CD8-positive, alpha-beta memory T cell (primary cell): ENCODE measurements at regions of chr1 and their contacts with region 1.

Region 1: GRCh38 chr1:53278201-53278725 is 39.9 kb upstream of the MAGOH start:
- DNase-seq: peak; percentile 49 to 78 (median 57)
- H3K4me3 ChIP-seq: no peak overlapping the region
- H3K4me3 Mint-ChIP-seq: no peak overlapping the region
- H3K27ac ChIP-seq: no peak overlapping the region
- H3K27ac Mint-ChIP-seq: peak overlapping the region in 3 of 8 donors; percentile 27 to 81 (median 66)
- H3K4me1 ChIP-seq: peaks cover 4% of the 10 kb centered on the region
- H3K4me1 Mint-ChIP-seq: peaks cover 2 to 5% (median 5%) of the 10 kb centered on the region in 3 donors
- H3K27me3 ChIP-seq: no peaks in the 10 kb centered on the region
- H3K27me3 Mint-ChIP-seq: no peaks in the 10 kb centered on the region

Region 2: DNA sequence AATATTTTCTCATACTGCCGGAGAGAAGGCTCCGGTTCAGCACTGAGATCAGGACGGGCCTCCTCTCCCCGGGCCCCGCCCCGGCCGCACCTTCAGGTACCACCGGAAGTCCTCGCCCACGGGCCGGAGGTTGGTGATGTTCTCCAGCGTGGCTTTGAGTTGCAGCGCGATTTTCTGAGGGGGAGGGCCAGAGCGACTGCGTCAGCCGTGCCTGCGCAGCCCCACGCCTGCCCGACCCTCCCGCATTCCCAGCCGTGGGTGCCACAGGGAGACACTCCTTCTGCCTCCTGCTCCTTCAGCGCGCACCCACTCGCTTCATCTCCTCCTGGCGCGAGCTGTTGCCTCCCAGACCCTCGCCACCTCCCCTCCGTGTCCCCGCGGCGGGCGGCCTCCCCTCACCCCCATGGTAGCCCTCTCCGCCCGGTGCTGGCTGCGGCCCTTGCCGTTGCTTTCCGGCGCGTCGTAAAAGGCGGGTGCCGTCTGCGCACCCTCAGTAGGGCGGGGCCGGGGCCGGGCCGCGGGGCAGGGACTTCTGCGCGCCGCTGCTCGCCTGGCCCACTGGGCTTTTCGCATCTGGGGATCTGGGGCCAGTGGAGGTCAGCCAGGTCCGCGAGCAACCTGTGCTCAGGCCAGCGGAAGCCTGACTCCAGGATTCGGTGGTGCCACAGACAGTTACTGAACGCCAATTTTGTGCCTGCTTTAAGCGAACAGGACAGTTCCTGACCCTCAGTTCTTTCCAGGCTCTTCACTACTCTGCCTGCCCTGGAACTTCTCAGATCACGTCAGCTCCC is 57.9 kb before region 1 on chr1 and contains the start of gene CZIB:
- CTCF ChIA-PET with region 1: no interaction called
- POLR2A ChIA-PET with region 1: no interaction called
- DNase-seq: peak; percentile 87 to 94 (median 91)
- H3K4me3 ChIP-seq: peak within 1 kb of the TSS; percentile 78
- H3K4me3 Mint-ChIP-seq: peak within 1 kb of the TSS; percentile 90 to 99 (median 93)
- H3K27ac ChIP-seq: peak within 1 kb of the TSS; percentile 90
- H3K27ac Mint-ChIP-seq: peak within 1 kb of the TSS; percentile 95 to 99 (median 98)
- H3K4me1 ChIP-seq: peaks cover 16% of the 10 kb centered on the region
- H3K4me1 Mint-ChIP-seq: peaks cover 23 to 28% (median 26%) of the 10 kb centered on the region in 3 donors
- H3K27me3 ChIP-seq: no peaks in the 10 kb centered on the region
- H3K27me3 Mint-ChIP-seq: peaks cover 0 to 4% of the 10 kb centered on the region in 2 donors
- total RNA-seq, gene CZIB: 58.0 to 58.4 TPM

Region 3: DNA sequence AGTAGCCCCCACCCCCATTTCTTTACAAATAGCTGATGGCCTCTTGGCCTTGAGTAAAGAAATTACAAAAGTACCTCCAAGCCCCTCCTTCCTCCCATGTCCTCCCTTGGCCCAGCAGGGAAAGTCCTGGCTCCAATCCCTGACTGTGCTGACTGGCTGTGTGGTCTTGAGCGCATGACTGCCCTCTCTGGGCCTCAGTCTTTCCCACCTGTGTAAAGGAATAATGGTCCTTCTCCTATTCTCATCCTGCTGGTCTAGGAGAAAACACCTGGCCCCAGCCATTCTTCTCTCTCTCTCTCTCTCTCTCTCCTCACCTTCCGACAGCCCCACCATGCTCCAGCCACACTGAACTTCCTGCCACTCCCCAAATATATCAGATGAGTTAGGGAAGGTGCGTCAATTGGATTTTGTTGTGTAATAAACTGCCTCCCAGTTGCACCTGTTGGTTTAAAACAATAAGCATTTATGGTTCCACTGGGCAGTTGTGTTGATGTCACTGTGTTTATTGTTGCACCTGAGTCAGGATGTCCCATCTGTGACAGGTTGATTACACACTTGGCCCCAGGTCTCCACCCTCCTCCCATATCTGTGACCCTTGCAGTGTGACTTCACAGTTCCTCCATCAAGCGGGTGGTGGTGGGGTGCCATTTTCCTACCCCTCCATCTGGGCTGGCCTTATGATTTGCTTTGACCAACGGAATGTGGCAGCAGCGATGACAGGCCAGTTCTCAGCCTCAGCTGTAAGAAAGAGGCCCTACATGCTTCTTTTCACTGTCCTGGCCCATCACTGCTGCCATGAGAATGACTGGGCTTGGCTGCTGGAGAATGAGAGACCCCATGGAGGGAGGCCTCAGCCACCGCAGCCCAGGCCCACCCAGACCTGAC is 71.9 kb after region 1 on chr1:
- CTCF ChIA-PET with region 1: no interaction called
- POLR2A ChIA-PET with region 1: no interaction called
- DNase-seq: no peak
- H3K4me3 ChIP-seq: no peak overlapping the region
- H3K4me3 Mint-ChIP-seq: no peak overlapping the region
- H3K27ac ChIP-seq: no peak overlapping the region
- H3K27ac Mint-ChIP-seq: peak overlapping the region in 1 of 8 donors; percentile 75
- H3K4me1 ChIP-seq: no peaks in the 10 kb centered on the region
- H3K4me1 Mint-ChIP-seq: no peaks in the 10 kb centered on the region
- H3K27me3 ChIP-seq: no peaks in the 10 kb centered on the region
- H3K27me3 Mint-ChIP-seq: peaks cover 0 to 6% of the 10 kb centered on the region in 2 donors

Region 4: DNA sequence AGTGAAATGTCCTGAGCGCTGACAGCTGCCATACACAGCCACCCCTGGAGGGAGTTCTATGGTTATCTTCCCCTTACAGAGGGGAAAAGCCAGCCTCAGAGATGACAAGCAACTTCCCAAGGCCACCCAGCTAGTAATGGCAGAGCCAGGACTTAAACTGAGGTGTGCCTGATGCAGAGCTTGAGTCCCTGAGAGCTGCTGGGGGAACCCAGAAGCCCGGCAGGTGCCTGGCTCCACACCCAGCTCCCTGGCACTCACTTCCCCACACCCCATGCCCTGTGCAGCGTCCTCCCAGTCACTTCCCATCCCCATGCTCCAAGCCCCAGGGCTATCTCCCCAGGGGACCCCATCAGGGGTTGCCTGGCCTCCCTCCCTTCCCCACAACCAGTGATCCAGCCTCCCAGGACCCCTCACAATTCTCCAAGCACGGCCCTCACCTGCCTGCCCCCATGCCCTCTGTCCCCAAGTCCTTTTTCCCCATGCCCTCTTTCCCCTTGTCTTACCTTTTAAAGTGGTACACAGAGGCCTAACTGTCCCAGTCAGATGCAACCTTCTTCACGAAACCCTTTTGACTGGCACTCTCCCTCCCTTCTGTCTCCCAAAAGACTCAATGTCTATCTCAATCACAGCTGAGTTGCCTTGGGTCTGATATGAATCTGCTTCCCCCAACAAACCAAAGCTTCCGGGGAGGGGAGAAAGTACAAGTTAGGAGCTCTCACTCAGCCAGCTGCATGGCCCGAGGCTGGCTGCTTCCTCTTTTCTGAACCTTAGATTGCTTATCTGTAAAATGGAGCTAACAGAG is 89.4 kb after region 1 on chr1:
- CTCF ChIA-PET with region 1: interaction called, 13 read pairs
- POLR2A ChIA-PET with region 1: no interaction called
- DNase-seq: peak in 3 of 5 donors; percentile 12 to 55 (median 17)
- H3K4me3 ChIP-seq: peak overlapping the region; percentile 50
- H3K4me3 Mint-ChIP-seq: peak overlapping the region; percentile 48 to 89 (median 83)
- H3K27ac ChIP-seq: no peak overlapping the region
- H3K27ac Mint-ChIP-seq: peak overlapping the region; percentile 62 to 95 (median 91)
- H3K4me1 ChIP-seq: peaks cover 24% of the 10 kb centered on the region
- H3K4me1 Mint-ChIP-seq: peaks cover 12 to 30% (median 23%) of the 10 kb centered on the region in 3 donors
- H3K27me3 ChIP-seq: no peaks in the 10 kb centered on the region
- H3K27me3 Mint-ChIP-seq: peaks cover 4 to 13% of the 10 kb centered on the region in 2 donors

Region 5: DNA sequence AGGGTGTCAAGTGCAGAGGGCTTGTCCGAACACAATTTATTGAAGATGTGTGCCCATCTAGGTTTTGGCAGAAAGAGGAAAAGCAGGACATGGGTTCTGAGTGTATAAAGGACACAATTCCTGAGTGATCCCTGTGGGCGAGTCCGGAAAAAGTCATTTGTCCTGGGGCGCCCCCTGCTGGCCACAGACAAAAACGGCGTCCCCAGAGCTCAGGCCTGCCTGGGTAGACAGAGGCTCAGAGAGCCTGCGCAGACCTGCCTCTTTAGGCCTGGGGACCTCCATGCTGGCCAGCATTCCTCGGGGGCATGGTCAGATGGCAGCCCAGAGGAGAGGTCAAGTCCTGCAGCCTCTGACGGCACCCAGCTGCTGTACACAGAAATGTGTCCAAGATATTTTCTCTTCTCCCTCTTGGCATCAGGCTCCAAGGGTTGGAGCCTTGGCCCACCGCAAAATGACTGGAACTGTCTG is 115.1 kb after region 1 on chr1:
- CTCF ChIA-PET with region 1: interaction called, 151 read pairs
- POLR2A ChIA-PET with region 1: no interaction called
- DNase-seq: peak; percentile 43 to 76 (median 61)
- H3K4me3 ChIP-seq: no peak overlapping the region
- H3K4me3 Mint-ChIP-seq: no peak overlapping the region
- H3K27ac ChIP-seq: no peak overlapping the region
- H3K27ac Mint-ChIP-seq: peak overlapping the region in 3 of 8 donors; percentile 23 to 74 (median 33)
- H3K4me1 ChIP-seq: no peaks in the 10 kb centered on the region
- H3K4me1 Mint-ChIP-seq: peaks cover 3 to 5% (median 5%) of the 10 kb centered on the region in 3 donors
- H3K27me3 ChIP-seq: no peaks in the 10 kb centered on the region
- H3K27me3 Mint-ChIP-seq: no peaks in the 10 kb centered on the region

Region 6: DNA sequence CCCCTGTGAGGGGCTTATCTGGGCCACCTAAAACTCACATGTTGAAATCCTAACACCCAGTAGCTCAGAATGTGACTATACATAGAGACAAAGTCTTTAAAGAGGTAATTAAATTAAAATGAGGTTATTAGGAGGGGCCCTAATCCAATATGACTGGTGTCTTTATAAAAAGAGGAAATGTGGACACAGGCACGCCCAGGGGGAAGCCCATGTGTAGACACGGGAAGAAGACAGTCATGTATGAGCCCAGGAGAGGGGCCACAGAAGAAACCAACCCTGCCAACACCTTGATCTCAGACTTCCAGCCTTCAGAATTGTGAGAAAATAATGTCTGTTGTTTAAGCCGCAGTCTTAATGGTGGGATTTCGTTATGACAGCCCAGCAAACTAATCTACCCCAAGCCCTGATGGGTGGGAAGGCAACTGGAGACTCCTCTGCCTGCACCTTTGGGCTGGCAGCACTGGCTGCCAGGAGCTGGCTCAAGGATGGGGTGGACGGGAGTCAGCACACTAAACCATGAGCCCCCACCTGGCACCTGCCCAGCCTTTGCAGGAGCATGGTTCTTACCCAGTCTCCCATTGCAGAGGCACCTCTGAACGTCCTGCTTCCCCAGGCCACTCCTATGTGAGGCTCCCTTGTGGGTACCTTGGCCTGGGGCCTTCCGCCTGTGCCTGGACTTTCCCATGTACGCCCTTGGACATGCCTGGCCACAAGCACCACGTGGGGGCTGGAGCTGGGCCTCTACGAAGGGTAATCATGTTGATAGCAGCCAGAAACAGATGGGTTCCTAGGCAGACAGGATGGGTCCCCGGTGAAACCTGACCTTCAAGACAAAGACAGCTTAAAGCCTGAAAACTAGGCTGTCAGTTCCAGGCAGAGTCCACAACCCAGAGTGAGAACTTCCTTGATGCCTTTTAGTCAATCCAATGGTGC is 123.8 kb after region 1 on chr1:
- CTCF ChIA-PET with region 1: interaction called, 151 read pairs
- POLR2A ChIA-PET with region 1: no interaction called
- DNase-seq: no peak
- H3K4me3 ChIP-seq: no peak overlapping the region
- H3K4me3 Mint-ChIP-seq: no peak overlapping the region
- H3K27ac ChIP-seq: no peak overlapping the region
- H3K27ac Mint-ChIP-seq: peak overlapping the region in 1 of 8 donors; percentile 52
- H3K4me1 ChIP-seq: no peaks in the 10 kb centered on the region
- H3K4me1 Mint-ChIP-seq: peaks cover 2 to 5% (median 4%) of the 10 kb centered on the region in 3 donors
- H3K27me3 ChIP-seq: no peaks in the 10 kb centered on the region
- H3K27me3 Mint-ChIP-seq: peaks cover 1 to 3% of the 10 kb centered on the region in 2 donors

Region 7: DNA sequence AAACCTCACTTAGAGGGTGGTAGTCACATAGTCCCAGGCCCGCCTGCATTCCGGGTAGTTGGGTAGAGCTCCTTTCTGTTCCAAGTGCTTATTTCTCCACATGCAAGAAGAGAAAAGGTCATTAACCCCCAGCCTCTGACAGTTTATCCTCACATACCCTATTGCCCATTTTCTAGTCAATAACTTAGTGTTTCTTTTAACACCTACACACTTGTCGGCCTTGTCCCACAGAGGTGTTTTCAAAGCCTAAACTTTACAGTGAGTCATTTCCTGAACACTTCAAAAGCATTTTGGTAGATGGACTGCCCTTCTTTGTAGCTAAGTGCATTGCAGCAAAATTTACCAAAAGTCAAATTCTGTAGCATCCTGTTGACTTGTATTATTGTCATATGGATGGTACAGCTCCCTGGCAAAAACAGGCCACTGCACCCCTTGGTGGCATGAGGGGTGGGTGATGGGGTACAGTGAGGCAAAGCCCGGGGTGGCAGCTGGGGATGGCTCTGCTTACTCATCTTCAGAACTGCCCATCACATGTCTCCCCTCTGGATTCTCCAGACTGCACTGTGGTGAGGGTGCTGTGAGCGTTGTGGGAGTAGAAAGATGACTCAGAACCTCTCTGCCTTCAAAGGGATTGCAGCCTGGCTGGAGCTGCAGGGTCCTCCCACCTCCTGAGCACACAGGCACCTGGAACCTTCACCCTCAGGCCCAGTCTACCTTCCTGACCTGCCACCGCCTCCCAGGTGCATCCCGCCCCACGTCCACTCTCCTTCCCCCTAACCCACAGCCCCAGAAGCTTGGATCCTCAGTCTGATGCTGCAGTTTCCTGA is 135.1 kb after region 1 on chr1:
- CTCF ChIA-PET with region 1: interaction called, 14 read pairs
- POLR2A ChIA-PET with region 1: no interaction called
- DNase-seq: peak; percentile 24 to 81 (median 48)
- H3K4me3 ChIP-seq: peak overlapping the region; percentile 5
- H3K4me3 Mint-ChIP-seq: peak overlapping the region; percentile 28 to 86 (median 78)
- H3K27ac ChIP-seq: peak overlapping the region; percentile 72
- H3K27ac Mint-ChIP-seq: peak overlapping the region; percentile 96 to 99 (median 99)
- H3K4me1 ChIP-seq: peaks cover 70% of the 10 kb centered on the region
- H3K4me1 Mint-ChIP-seq: peaks cover 66 to 89% (median 81%) of the 10 kb centered on the region in 3 donors
- H3K27me3 ChIP-seq: no peaks in the 10 kb centered on the region
- H3K27me3 Mint-ChIP-seq: no peaks in the 10 kb centered on the region

Region 8: DNA sequence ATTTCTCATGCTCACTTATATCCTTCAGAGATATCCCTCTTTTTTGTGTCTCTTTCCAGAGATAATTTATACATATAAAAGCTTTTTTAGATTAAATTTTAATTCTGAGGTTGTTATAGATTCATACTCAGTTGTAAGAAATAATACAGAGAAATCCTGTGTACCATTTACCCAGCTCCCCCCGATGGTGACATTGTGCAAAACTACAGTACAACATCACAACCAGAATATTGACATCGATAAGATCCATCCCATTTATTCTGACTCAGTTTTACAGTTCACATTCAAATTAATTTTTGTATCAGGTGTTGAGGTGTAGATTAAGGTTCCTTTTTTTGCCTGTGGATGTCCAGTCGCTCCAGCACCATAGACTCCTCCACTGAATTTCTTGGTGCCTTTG is 195.2 kb after region 1 on chr1:
- CTCF ChIA-PET with region 1: interaction called, 20 read pairs
- POLR2A ChIA-PET with region 1: no interaction called
- DNase-seq: no peak
- H3K4me3 ChIP-seq: no peak overlapping the region
- H3K4me3 Mint-ChIP-seq: no peak overlapping the region
- H3K27ac ChIP-seq: no peak overlapping the region
- H3K27ac Mint-ChIP-seq: peak overlapping the region in 1 of 8 donors; percentile 43
- H3K4me1 ChIP-seq: no peaks in the 10 kb centered on the region
- H3K4me1 Mint-ChIP-seq: no peaks in the 10 kb centered on the region
- H3K27me3 ChIP-seq: no peaks in the 10 kb centered on the region
- H3K27me3 Mint-ChIP-seq: peaks cover 0 to 1% of the 10 kb centered on the region in 2 donors